Panc1 (cell line): ENCODE measurements at regions of chr7 and their contacts with region 1.

Region 1: DNA sequence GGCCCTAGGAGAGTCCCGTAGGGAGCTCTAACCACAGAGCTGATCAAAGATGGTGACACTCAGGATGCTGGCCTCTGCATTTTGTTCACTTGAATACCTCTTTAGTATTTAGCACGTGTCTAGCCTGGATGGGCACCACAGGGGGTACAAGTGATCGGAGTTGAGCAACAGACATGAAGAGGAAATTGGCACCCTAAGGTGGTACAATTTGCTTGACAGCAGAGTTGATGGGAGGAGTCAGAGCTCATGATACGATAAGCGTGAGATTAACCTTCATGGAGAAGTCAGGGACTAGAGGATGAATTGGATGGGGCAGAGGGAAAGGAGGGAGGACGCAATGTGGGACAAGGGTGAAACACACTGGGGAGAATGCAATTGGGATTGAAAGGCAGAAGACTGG is 9.9 kb upstream of the ZNF212 start:
- DNase-seq: no peak
- ATAC-seq: peak; percentile 8; the same call in 1 of the 2 replicates
- H3K4me3 ChIP-seq: no peak overlapping the region
- H3K27ac ChIP-seq: no peak overlapping the region
- H3K4me1 ChIP-seq: no peaks in the 10 kb centered on the region
- H3K27me3 ChIP-seq: no peaks in the 10 kb centered on the region
- CTCF ChIP-seq: no peak

Region 2: GRCh38 chr7:149529136-149529718 is 299.7 kb after region 1 on chr7:
- CTCF ChIA-PET with region 1: interaction called, 10 read pairs
- POLR2A ChIA-PET with region 1: no interaction called
- in situ Hi-C with region 1: no loop called
- intact Hi-C with region 1: no loop called
- DNase-seq: no peak
- ATAC-seq: no peak
- H3K4me3 ChIP-seq: no peak overlapping the region
- H3K27ac ChIP-seq: no peak overlapping the region
- H3K4me1 ChIP-seq: no peaks in the 10 kb centered on the region
- H3K27me3 ChIP-seq: no peaks in the 10 kb centered on the region
- CTCF ChIP-seq: no peak